Heart right ventricle (tissue), 16 donors: ENCODE measurements at regions of chr11 and their contacts with region 1.

Region 1: DNA sequence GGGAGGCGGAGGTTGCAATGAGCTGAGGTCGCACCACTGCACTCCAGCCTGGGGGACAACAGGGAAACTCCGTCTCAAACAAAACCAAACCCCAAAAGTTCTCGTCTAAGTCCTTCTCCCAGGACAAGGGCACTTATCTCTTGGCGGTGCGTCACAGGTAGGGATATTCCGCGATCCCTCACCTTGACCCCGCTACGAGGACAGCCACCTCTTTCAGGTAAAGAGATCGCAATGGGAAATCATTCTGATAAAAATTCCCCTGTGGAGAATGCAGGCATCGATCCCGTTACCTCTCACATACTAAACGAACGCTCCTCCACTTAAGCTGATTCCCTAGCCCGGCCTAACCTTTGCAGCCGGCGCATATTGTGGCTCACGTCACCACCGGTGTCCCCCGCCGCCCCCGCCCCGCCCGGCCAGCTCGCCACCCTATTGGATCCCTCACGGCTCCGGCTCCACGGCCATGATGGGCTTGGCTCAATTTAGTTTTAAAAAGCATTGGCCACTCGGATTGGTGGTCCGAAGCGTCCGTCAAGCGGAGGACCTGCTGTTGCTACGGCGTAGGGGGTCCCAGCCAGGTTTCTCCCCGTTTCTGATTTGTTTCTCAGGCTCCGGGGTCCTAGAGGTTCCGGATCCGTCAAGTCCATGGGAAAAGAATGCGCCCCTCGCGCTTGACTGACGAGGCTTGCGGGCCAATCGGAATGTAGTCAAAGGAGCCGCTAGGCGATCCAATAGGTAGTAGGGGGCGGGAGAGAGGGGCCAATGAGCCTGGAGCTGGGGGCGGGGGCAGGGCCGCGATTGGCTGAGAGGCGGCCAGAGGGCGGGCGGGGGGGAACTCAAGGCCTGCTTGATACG is 439 bp upstream of the PPP6R3 start:
- DNase-seq: peak; percentile 93 to 99
- ATAC-seq: peak; percentile 91 to 97 (median 96)
- H3K4me3 ChIP-seq: peak overlapping the region; percentile 62 to 94 (median 90)
- H3K27ac ChIP-seq: peak overlapping the region; percentile 92 to 99 (median 97)
- H3K4me1 ChIP-seq: peaks cover 5 to 45% (median 38%) of the 10 kb centered on the region in 9 donors
- H3K27me3 ChIP-seq: no peaks in the 10 kb centered on the region
- CTCF ChIP-seq: no peak

Region 2: GRCh38 chr11:68370211-68371111 is 89.7 kb before region 1 on chr11:
- intact Hi-C with region 1: no loop called
- DNase-seq: peak; percentile 39 to 48
- ATAC-seq: peak; percentile 25 to 61 (median 44)
- H3K4me3 ChIP-seq: no peak overlapping the region
- H3K27ac ChIP-seq: peak overlapping the region; percentile 78 to 94 (median 84)
- H3K4me1 ChIP-seq: peaks cover 43 to 63% (median 59%) of the 10 kb centered on the region in 9 donors
- H3K27me3 ChIP-seq: peaks cover 0 to 3% (median 0%) of the 10 kb centered on the region in 7 donors
- CTCF ChIP-seq: no peak

Region 3: GRCh38 chr11:68424981-68425865 is 34.9 kb before region 1 on chr11:
- intact Hi-C with region 1: no loop called
- DNase-seq: no peak
- ATAC-seq: peak in 1 of 8 donors; percentile 28
- H3K4me3 ChIP-seq: no peak overlapping the region
- H3K27ac ChIP-seq: no peak overlapping the region
- H3K4me1 ChIP-seq: peaks cover 0 to 9% (median 0%) of the 10 kb centered on the region in 9 donors
- H3K27me3 ChIP-seq: no peaks in the 10 kb centered on the region
- CTCF ChIP-seq: no peak

Region 4: DNA sequence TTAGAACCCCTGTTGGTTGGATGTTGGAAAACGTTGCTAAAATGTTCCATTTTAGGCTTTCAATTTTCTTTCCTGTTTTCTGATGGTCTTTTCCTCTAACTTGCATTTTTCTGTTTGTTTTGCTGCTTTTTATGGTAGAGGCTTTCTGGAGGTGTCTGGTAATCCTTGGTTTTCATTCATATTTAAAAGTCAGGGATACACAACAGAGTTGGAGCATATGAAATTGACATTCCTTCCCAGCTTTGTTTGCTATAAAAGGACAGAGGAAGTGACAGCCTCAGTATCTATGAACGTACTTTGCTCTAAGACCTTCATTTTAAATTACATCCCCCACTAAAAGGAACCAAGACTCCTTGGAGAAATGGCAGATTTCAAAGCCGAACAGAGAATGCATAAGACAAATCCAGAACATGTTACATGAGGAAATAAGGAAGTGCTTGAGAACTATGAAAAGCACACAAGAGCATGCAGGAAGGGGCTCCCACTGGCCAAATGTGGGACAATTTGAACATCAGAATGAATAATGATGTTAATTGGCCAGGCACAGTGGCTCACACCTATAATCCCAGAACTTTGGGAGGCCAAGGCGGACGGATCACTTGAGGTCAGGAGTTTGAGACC is 57.1 kb after region 1 on chr11:
- intact Hi-C with region 1: loop called in 5 of 10 experiments (anchors 10 kb)
- DNase-seq: no peak
- ATAC-seq: no peak
- H3K4me3 ChIP-seq: no peak overlapping the region
- H3K27ac ChIP-seq: no peak overlapping the region
- H3K4me1 ChIP-seq: peaks cover 0 to 53% (median 18%) of the 10 kb centered on the region in 9 donors
- H3K27me3 ChIP-seq: no peaks in the 10 kb centered on the region
- CTCF ChIP-seq: no peak

Region 5: DNA sequence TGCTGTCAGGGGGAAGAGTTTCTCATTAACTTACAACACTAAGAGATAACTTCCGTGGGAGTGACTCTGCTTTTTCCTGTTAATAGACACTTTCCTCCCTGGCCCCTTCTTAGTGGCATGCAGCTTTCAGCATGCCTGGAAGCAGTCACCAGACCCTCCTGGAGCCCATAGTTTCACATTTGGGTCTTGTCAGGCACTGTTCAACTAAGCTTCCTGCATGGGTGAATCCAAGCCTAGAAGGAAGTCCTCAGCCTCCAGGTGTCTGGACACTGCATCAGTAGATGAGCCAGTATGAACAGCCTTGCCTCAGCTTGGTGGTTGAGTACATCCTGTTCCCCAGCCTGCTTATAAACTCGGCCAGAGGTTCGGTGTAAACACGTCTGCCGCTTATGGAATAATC is 68.5 kb after region 1 on chr11:
- intact Hi-C with region 1: loop called in 4 of 10 experiments (anchors 10 kb)
- DNase-seq: no peak
- ATAC-seq: peak in 6 of 8 donors; percentile 5 to 61 (median 38)
- H3K4me3 ChIP-seq: no peak overlapping the region
- H3K27ac ChIP-seq: peak overlapping the region in 3 of 10 donors; percentile 12 to 59 (median 39)
- H3K4me1 ChIP-seq: peaks cover 13 to 84% (median 72%) of the 10 kb centered on the region in 9 donors
- H3K27me3 ChIP-seq: no peaks in the 10 kb centered on the region
- CTCF ChIP-seq: no peak

Region 6: GRCh38 chr11:68542617-68543016 is 82.5 kb after region 1 on chr11:
- intact Hi-C with region 1: loop called in 3 of 10 experiments (anchors 5 to 10 kb)
- DNase-seq: no peak
- ATAC-seq: no peak
- H3K4me3 ChIP-seq: no peak overlapping the region
- H3K27ac ChIP-seq: peak overlapping the region in 3 of 10 donors; percentile 3 to 26 (median 20)
- H3K4me1 ChIP-seq: peaks cover 0 to 65% (median 53%) of the 10 kb centered on the region in 9 donors
- H3K27me3 ChIP-seq: no peaks in the 10 kb centered on the region
- CTCF ChIP-seq: no peak

Region 7: GRCh38 chr11:68584097-68584496 is 124.0 kb after region 1 on chr11:
- intact Hi-C with region 1: loop called in 6 of 10 experiments (anchors 5 to 10 kb)
- DNase-seq: peak; percentile 46 to 47
- ATAC-seq: peak in 3 of 8 donors; percentile 15 to 35 (median 19)
- H3K4me3 ChIP-seq: no peak overlapping the region
- H3K27ac ChIP-seq: peak overlapping the region in 9 of 10 donors; percentile 19 to 87 (median 76)
- H3K4me1 ChIP-seq: peaks cover 10 to 66% (median 35%) of the 10 kb centered on the region in 9 donors
- H3K27me3 ChIP-seq: no peaks in the 10 kb centered on the region
- CTCF ChIP-seq: peak; percentile 31 to 73 (median 61)

Region 8: GRCh38 chr11:68598816-68599653 is 138.9 kb after region 1 on chr11:
- intact Hi-C with region 1: loop called in 1 of 10 experiments (anchors 10 kb)
- DNase-seq: no peak
- ATAC-seq: peak in 1 of 8 donors; percentile 24
- H3K4me3 ChIP-seq: no peak overlapping the region
- H3K27ac ChIP-seq: no peak overlapping the region
- H3K4me1 ChIP-seq: no peaks in the 10 kb centered on the region
- H3K27me3 ChIP-seq: no peaks in the 10 kb centered on the region
- CTCF ChIP-seq: no peak

Region 9: GRCh38 chr11:68839054-68839865 is 379.1 kb after region 1 on chr11:
- intact Hi-C with region 1: loop called in 1 of 10 experiments (anchors 5 kb)
- DNase-seq: peak; percentile 93 to 97
- ATAC-seq: peak; percentile 77 to 92 (median 88)
- H3K4me3 ChIP-seq: peak overlapping the region in 9 of 10 donors; percentile 74 to 98 (median 91)
- H3K27ac ChIP-seq: peak overlapping the region; percentile 85 to 99 (median 90)
- H3K4me1 ChIP-seq: peaks cover 21 to 84% (median 74%) of the 10 kb centered on the region in 9 donors
- H3K27me3 ChIP-seq: no peaks in the 10 kb centered on the region
- CTCF ChIP-seq: no peak